ENCODE measurements at regions of chr9 and their contacts with region 1.

Region 1: GRCh38 chr9:33290247-33291030 is at the start of gene NFX1:
- DNase-seq: peak; percentile 99
- H3K4me3 Mint-ChIP-seq: peak within 1 kb of the TSS; percentile 87
- H3K27ac Mint-ChIP-seq: peak within 1 kb of the TSS; percentile 99
- H3K4me1 Mint-ChIP-seq: peaks cover 55% of the 10 kb centered on the region
- H3K27me3 Mint-ChIP-seq: no peaks in the 10 kb centered on the region
- total RNA-seq, gene NFX1: 32.4 to 32.6 TPM

Region 2: GRCh38 chr9:32533336-32533735 is 757.1 kb before region 1 on chr9:
- CTCF ChIA-PET with region 1: no interaction called
- intact Hi-C with region 1: no loop called
- DNase-seq: no peak
- H3K4me3 Mint-ChIP-seq: no peak overlapping the region
- H3K27ac Mint-ChIP-seq: no peak overlapping the region
- H3K4me1 Mint-ChIP-seq: peaks cover 3% of the 10 kb centered on the region
- H3K27me3 Mint-ChIP-seq: no peaks in the 10 kb centered on the region

Region 3: GRCh38 chr9:32550562-32551433 is 739.6 kb before region 1 on chr9:
- CTCF ChIA-PET with region 1: no interaction called
- intact Hi-C with region 1: loop called (anchors 1 kb)
- DNase-seq: peak; percentile 93
- H3K4me3 Mint-ChIP-seq: peak overlapping the region; percentile 95
- H3K27ac Mint-ChIP-seq: peak overlapping the region; percentile 99
- H3K4me1 Mint-ChIP-seq: peaks cover 43% of the 10 kb centered on the region
- H3K27me3 Mint-ChIP-seq: no peaks in the 10 kb centered on the region

Region 4: DNA sequence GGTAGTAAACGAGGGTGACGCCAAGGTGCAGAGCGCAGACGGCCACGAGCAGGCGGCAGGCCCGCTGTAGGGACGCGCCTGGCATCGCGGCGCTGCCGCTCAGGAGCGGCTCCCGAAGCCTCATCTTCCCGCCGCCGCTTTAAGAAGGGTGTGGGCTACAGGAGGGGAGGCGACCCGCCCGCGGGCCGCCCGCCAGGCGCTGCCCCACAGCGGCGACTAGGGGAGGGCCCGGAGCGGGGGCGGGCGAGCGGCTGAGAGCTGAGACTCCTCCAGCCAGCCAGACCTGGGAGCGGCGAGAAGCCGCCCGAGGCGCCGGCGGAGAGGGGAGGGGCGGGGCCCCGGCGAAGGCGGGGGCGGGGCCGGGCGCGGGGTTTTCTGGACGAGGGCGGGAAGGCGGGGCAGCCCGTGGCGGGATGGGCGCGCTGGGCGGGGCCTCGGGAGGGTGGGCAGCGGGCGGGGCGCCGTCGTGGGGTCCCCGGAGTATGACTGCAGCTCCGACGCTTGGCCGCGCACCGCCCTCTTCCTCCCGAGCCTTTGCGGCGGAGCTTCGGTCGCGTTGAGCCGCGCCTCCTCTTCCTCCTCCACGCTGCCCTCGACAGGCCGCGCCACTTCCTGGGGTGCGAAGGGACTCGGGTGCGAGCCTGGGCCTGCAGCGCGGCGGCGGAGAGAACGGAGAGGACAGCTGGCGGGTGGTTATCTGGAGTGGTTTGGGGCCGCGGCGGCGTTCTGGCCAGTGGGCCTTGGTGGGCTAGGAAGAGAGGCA is 123.2 kb before region 1 on chr9 and contains the start of gene B4GALT1:
- CTCF ChIA-PET with region 1: no interaction called
- intact Hi-C with region 1: loop called (anchors 1 kb)
- DNase-seq: peak; percentile 97
- H3K4me3 Mint-ChIP-seq: peak within 1 kb of the TSS; percentile 97
- H3K27ac Mint-ChIP-seq: peak within 1 kb of the TSS; percentile 97
- H3K4me1 Mint-ChIP-seq: peaks cover 53% of the 10 kb centered on the region
- H3K27me3 Mint-ChIP-seq: no peaks in the 10 kb centered on the region
- total RNA-seq, gene B4GALT1: 42.8 to 44.1 TPM

Region 5: GRCh38 chr9:33320568-33321261 is 30.3 kb after region 1 on chr9:
- CTCF ChIA-PET with region 1: interaction called, 15 read pairs
- intact Hi-C with region 1: loop called (anchors 1 kb)
- DNase-seq: peak; percentile 57
- H3K4me3 Mint-ChIP-seq: no peak overlapping the region
- H3K27ac Mint-ChIP-seq: peak overlapping the region; percentile 85
- H3K4me1 Mint-ChIP-seq: peaks cover 21% of the 10 kb centered on the region
- H3K27me3 Mint-ChIP-seq: no peaks in the 10 kb centered on the region

Region 6: DNA sequence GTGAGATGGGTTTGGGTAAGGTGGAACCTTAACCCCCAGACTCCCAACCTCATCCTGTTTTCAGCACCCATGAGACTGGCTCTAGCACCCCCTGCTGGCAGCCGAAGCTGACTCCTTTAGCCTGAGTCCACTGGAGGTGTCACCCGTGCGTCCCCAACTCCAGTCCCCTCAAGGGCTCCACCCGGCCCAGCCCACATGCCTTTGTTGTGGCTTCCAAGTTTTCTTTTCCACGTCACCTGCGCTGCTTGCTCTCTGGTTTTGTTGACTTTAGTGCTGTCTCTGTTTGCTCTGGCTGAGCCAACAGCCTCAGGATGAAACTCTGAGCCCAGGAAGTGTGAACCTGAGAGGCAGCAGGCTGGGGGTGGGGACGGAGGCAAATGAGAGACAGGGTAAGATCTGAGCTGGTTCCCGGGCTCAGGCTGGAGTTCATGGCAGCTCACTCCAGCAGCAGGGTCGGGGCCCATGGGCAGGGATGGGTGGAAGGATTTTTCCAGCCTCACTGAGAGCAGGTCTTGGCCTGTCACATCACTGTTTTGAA is 125.1 kb after region 1 on chr9:
- CTCF ChIA-PET with region 1: interaction called, 7 read pairs
- intact Hi-C with region 1: loop called (anchors 1 kb)
- DNase-seq: peak; percentile 98
- H3K4me3 Mint-ChIP-seq: no peak overlapping the region
- H3K27ac Mint-ChIP-seq: peak overlapping the region; percentile 89
- H3K4me1 Mint-ChIP-seq: peaks cover 43% of the 10 kb centered on the region
- H3K27me3 Mint-ChIP-seq: no peaks in the 10 kb centered on the region

Region 7: GRCh38 chr9:33466565-33467495 is 176.4 kb after region 1 on chr9:
- CTCF ChIA-PET with region 1: interaction called, 11 read pairs
- intact Hi-C with region 1: loop called (anchors 2 kb)
- DNase-seq: peak; percentile 81
- H3K4me3 Mint-ChIP-seq: no peak overlapping the region
- H3K27ac Mint-ChIP-seq: peak overlapping the region; percentile 24
- H3K4me1 Mint-ChIP-seq: peaks cover 16% of the 10 kb centered on the region
- H3K27me3 Mint-ChIP-seq: no peaks in the 10 kb centered on the region

Region 8: GRCh38 chr9:34048923-34049697 is 758.7 kb after region 1 on chr9:
- CTCF ChIA-PET with region 1: no interaction called
- intact Hi-C with region 1: loop called (anchors 1 kb)
- DNase-seq: peak; percentile 98
- H3K4me3 Mint-ChIP-seq: peak overlapping the region; percentile 91
- H3K27ac Mint-ChIP-seq: peak overlapping the region; percentile 98
- H3K4me1 Mint-ChIP-seq: peaks cover 33% of the 10 kb centered on the region
- H3K27me3 Mint-ChIP-seq: no peaks in the 10 kb centered on the region

Measured in activated naive CD4-positive, alpha-beta T cell treated with anti-CD3 and anti-CD28 coated beads for 36 hours (primary cell).